ENCODE measurements at regions of chr1 and their contacts with region 1.

Region 1: DNA sequence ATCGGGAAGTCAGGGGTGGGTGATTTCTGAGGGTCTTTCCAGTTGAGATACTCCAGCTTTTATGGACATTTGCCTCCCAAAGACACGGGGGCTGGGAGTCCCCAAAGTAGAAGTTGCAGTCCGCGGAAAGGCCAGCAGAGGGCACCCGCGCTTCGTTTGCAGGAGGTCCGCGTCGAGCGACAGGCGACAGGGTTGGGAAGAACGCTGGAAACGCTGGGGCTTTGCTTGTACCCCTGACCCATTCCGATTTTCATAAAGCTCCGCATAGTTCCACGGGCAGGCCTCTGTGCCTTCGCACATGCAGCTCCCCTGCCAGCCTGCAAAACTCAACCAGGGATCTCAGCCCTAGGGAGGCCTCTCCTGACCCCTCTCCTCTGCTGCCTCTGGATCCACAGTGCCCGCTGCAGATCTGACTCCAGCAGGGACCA is 44.2 kb upstream of the LAPTM5 start:
- DNase-seq: peak; percentile 59
- H3K4me3 ChIP-seq: no peak overlapping the region
- H3K27ac ChIP-seq: no peak overlapping the region
- H3K4me1 ChIP-seq: peaks cover 2% of the 10 kb centered on the region
- H3K27me3 ChIP-seq: peaks cover 12 to 18% of the 10 kb centered on the region in 2 experiments
- CTCF ChIP-seq: peak; percentile 88 to 94
- POLR2A ChIP-seq: no peak

Region 2: GRCh38 chr1:30407865-30408580 is 393.8 kb before region 1 on chr1:
- CTCF ChIA-PET with region 1: no interaction called
- POLR2A ChIA-PET with region 1: no interaction called
- dilution Hi-C with region 1: no loop called
- intact Hi-C with region 1: no loop called
- DNase-seq: no peak
- H3K4me3 ChIP-seq: no peak overlapping the region
- H3K27ac ChIP-seq: no peak overlapping the region
- H3K4me1 ChIP-seq: no peaks in the 10 kb centered on the region
- H3K27me3 ChIP-seq: no peaks in the 10 kb centered on the region
- CTCF ChIP-seq: no peak
- POLR2A ChIP-seq: no peak

Region 3: DNA sequence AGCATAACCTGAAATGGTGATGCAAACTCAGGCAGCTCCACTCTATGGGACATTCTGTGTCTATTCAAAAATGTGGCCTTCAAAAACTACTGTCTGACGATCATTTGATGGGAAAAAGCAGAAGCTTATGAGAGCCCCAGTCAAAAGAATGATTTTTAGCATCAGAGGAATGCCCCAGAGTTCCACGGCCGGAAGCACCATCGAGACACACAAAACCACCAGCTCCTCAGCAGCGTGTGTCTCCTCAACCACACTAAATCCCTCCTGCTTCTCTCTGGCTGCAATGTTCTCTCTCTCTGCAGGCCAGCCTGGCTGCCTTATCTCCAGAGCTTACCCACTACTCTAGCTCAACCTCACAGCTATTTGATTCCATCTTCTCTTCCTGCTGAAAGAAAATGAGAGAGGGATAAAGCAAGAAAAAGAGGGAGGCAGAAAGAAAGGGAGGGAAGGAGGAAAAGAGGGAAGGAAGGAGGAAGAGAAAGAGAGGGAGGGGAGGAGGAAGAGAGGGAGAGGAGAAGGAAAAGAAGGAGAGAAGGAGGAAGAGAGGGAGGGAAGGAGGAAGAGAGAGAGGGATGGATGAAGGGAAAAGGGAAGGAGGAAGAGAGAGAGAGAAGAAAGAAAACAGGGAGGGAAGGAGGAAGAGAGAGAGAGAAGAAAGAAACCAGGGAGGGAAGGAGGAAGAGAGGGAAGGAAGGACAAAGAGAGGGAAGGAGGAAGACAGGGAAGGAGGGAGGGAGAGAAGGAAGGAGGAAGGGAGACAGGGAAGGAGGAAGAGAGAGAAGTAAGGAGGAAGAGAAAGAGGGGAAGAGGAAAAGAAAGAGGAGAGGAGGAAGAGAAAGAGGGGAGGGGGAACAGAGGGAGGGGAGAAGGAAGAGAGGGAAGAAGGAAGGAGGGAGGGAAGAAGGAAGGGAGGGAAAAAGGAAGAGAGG is 10.7 kb before region 1 on chr1:
- CTCF ChIA-PET with region 1: interaction called, 11 read pairs
- POLR2A ChIA-PET with region 1: no interaction called
- dilution Hi-C with region 1: no loop called
- intact Hi-C with region 1: no loop called
- DNase-seq: no peak
- H3K4me3 ChIP-seq: no peak overlapping the region
- H3K27ac ChIP-seq: no peak overlapping the region
- H3K4me1 ChIP-seq: no peaks in the 10 kb centered on the region
- H3K27me3 ChIP-seq: peaks cover 1 to 9% of the 10 kb centered on the region in 2 experiments
- CTCF ChIP-seq: no peak
- POLR2A ChIP-seq: no peak

Region 4: DNA sequence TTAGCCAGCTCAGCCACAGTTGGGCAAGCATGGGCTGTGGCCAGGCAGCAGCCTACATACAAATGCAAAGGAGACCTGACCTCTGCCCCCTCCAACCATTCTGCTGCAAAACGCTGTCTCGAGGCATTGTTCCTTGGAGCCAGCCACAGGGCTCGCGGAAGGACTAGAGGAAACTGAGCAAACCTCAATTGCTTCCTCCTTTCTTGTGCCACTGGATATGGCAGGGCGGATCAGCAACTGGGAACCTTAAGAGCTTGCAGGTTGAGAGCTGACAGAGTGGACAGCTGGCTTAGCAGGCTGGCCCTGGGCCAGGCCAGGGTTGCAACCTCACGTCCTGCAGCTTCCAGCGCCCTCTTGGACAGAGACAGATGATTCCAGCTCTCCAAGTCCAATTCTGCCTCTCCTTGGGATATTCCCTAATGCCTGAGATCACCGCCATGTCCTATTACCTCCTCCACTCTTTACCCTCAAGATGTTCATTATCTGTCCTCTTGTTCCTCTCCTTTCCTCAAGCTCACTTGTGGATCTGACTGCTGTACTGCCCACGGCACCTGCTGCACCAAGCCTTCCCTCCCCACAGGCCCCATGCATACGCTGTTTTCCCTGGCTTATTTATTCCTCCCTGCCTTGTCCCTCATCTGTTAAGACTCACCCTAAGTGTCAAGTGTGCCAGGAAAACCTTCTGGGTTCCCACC is 39.3 kb after region 1 on chr1:
- CTCF ChIA-PET with region 1: interaction called, 26 read pairs
- POLR2A ChIA-PET with region 1: no interaction called
- dilution Hi-C with region 1: no loop called
- intact Hi-C with region 1: loop called (anchors 2 kb)
- DNase-seq: peak; percentile 95
- H3K4me3 ChIP-seq: no peak overlapping the region
- H3K27ac ChIP-seq: no peak overlapping the region
- H3K4me1 ChIP-seq: peaks cover 12% of the 10 kb centered on the region
- H3K27me3 ChIP-seq: peaks cover 68% of the 10 kb centered on the region in 2 experiments
- CTCF ChIP-seq: no peak
- POLR2A ChIP-seq: no peak

Region 5: DNA sequence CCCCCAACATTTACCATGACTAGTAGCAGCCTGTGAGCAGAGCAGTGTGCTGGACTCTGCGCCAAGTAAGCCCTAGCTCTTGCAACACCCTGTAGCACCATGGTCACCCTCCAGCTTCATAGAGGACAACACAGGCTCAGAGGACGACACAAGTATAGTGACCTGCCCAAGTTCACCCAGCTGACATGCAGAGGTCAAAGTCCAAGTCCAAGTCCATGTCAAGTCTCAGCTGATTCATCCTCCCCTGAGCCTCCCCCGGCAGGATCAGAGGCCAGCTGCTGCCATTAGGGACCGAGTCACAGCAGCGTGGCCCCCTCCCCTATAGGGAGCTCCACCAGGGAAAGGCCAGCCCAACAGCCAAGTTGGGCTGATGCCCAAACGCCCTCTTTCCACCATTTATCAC is 90.9 kb after region 1 on chr1:
- CTCF ChIA-PET with region 1: interaction called, 12 read pairs
- POLR2A ChIA-PET with region 1: no interaction called
- dilution Hi-C with region 1: no loop called
- intact Hi-C with region 1: no loop called
- DNase-seq: no peak
- H3K4me3 ChIP-seq: no peak overlapping the region
- H3K27ac ChIP-seq: no peak overlapping the region
- H3K4me1 ChIP-seq: no peaks in the 10 kb centered on the region
- H3K27me3 ChIP-seq: no peaks in the 10 kb centered on the region
- CTCF ChIP-seq: no peak
- POLR2A ChIP-seq: no peak

Region 6: DNA sequence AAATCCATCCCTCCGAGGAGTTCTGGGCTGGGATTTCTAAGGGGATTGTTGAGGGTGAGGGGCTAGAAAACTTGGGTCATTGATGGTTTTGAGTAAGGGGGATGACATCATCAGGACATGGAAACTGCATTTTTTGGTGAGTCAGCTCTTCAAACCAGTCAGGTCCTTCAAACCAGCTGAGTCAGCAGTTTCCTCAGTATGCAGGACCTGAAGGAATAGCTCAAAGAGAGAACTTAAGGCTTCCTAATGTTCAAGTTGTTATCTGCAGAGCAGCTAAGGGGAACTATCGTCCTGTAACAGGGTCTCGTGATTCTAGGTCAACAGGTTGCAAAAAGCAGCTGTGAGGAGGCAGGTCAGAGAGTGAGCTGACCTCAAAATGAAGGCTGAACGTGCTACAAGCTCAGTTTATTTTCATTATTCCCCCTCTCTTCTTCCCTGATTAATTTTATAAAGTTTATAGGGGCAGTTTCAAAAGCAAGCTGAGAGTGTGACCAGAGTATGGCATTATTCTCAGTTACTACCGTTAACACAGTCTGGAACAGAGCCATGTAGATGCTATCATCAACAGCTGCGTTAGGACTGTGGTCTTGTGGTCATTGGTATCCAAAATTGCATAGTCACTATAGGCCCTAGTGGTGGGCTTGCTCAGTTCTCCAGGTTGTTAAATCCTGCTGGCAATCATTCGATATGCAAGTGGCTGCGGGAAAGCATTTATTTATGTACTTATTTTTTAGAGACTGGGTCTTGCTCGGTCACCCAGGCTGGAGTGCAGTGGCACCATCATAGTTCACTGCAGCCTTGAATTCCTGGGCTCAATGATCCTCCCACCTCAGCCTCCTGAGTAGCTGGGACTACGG is 117.5 kb after region 1 on chr1:
- CTCF ChIA-PET with region 1: interaction called, 528 read pairs
- POLR2A ChIA-PET with region 1: no interaction called
- dilution Hi-C with region 1: loop called (anchors 25 kb)
- intact Hi-C with region 1: no loop called
- DNase-seq: no peak
- H3K4me3 ChIP-seq: no peak overlapping the region
- H3K27ac ChIP-seq: no peak overlapping the region
- H3K4me1 ChIP-seq: no peaks in the 10 kb centered on the region
- H3K27me3 ChIP-seq: peaks cover 0 to 2% of the 10 kb centered on the region in 2 experiments
- CTCF ChIP-seq: no peak
- POLR2A ChIP-seq: no peak

Region 7: DNA sequence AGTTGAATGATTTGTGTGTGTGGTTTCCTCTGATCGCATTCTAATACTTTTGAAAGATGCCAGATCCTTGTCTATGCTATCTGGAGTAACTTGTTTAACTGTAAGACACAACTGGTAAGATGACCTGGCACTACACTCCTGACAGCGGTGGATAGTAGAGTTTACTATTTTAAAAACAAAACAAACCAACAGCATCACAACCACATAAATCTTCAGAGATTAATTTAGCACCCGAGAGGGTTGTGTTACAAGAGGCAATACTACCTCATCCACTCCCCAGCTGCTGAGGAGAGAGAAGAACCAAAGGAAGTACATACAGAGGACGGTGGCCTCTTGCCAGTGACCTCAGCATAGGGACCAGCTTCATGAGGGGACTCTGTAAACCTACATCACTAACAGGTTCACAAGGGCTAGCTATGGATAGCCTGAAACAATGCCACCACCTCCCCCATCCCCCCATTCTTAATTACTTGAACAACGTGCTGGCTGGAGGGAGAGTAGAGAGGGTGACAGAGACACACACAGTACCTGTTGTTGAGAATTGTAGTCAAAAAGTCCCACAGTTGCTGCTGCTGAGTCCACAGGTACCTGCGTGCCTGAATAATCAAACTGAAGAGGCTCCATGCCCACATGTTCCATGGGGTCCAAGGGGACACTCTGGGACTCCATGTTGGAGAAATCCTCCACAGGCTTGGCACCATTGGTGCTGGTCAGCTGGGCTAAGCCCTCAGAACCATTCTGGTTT is 190.2 kb after region 1 on chr1:
- CTCF ChIA-PET with region 1: no interaction called
- POLR2A ChIA-PET with region 1: no interaction called
- dilution Hi-C with region 1: no loop called
- intact Hi-C with region 1: no loop called
- DNase-seq: no peak
- H3K4me3 ChIP-seq: no peak overlapping the region
- H3K27ac ChIP-seq: no peak overlapping the region
- H3K4me1 ChIP-seq: no peaks in the 10 kb centered on the region
- H3K27me3 ChIP-seq: no peaks in the 10 kb centered on the region
- CTCF ChIP-seq: no peak
- POLR2A ChIP-seq: no peak

Measured in endothelial cell of umbilical vein (primary cell).